A673 (cell line): ENCODE measurements at regions of chr1 and their contacts with region 1.

Region 1: DNA sequence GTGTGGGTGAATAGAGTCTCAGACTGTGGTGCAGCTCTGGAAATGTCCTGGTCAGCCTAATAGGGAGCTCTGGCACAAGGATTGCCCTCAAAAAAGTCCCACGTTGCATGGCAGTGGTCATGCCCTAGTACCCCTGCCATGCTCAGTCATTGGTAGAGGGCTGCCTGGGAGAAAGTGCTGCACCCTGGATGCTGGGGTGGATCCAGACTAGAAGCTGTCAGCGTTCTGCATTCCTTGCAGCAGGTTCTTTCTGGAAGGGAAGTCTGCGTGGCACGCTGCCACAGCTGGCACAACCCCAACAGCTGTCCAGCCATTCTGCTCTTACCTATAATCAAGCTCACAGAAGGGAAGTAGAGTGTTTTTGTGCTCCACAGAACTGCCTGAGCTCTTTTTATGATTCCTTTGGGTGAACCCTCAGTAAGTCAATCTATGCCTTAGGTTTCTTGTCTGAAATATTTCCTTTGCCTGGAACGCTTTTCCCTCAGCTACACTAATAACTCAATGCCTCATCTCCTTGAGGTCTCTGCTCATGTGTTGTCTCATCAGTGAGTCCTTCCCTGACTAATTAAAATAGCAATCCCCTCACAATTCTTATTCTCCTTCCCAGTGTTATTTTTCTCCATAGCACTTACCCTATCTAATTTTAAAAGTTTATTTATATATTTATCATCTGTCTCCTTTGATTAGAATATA is 61.5 kb upstream of the JAK1 start:
- DNase-seq: no peak
- H3K4me3 ChIP-seq: no peak overlapping the region
- H3K27ac ChIP-seq: peak overlapping the region; percentile 78
- H3K4me1 ChIP-seq: peaks cover 40% of the 10 kb centered on the region
- H3K27me3 ChIP-seq: no peaks in the 10 kb centered on the region
- CTCF ChIP-seq: no peak

Region 2: DNA sequence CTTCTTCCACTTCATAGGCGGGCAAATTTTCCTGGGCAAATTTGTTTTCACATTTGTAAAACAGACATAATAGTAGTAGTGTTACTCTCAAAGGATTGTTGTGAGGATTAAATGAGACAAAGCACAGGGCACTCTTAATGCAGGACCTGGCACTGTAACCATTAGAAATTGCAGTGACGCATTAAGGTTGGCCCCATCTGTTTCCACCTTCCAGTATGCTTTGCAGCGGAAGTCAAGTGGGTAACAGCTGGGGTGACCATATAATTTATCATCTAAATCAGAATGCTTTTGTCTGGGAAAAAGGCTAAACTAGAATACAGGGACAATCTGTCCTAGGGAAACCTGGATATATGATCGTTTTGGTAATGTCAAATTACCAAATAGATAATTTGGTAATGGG is 690.3 kb before region 1 on chr1:
- CTCF ChIA-PET with region 1: no interaction called
- POLR2A ChIA-PET with region 1: interaction called, 11 read pairs
- intact Hi-C with region 1: no loop called
- DNase-seq: peak; percentile 79
- H3K4me3 ChIP-seq: no peak overlapping the region
- H3K27ac ChIP-seq: peak overlapping the region; percentile 94
- H3K4me1 ChIP-seq: peaks cover 33% of the 10 kb centered on the region
- H3K27me3 ChIP-seq: no peaks in the 10 kb centered on the region
- CTCF ChIP-seq: no peak

Region 3: DNA sequence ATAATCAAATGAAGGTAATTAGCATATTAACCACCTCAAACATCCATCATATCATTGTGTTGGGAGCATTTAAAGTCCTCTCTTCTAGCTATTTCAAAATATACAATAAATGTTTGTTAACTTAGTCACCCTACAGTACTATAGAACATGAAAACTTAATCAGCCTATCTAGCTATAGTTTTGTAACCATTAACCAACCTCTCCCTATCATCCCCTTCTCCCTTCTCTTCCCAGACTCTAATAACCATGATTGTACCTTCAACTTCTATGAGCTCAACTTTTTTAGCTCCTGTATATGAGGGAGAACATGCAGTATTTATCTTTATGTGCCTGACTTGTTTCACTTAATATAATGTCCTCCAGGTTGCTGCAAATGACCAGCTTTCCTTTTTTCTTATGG is 228.9 kb before region 1 on chr1:
- CTCF ChIA-PET with region 1: no interaction called
- POLR2A ChIA-PET with region 1: no interaction called
- intact Hi-C with region 1: no loop called
- DNase-seq: no peak
- H3K4me3 ChIP-seq: no peak overlapping the region
- H3K27ac ChIP-seq: no peak overlapping the region
- H3K4me1 ChIP-seq: no peaks in the 10 kb centered on the region
- H3K27me3 ChIP-seq: no peaks in the 10 kb centered on the region
- CTCF ChIP-seq: no peak

Region 4: DNA sequence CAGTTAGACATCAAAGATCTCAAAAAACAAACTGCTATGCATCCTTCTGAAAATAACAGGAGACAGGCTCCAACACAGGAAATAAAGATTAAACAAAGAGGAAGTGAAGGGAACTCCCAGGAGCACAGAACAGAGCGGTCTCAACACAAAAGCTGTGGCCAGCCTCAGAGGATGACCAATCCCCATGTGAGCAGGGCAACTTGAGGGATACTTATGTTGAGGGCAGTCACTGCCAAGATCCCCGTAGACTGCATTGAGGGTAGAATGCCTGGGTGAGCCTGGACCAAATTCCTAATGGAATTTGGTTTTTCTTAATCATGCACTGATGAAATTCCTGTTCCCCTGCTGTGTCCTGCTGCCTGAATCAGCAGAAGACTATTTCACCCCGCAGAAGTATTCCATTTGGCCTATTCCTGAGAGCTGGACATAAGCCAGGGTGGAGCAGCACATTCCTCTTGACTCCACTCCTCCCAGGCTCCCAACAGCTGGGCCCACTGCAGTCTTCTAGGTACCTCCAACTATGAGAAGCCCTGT is 110.4 kb before region 1 on chr1:
- CTCF ChIA-PET with region 1: no interaction called
- POLR2A ChIA-PET with region 1: no interaction called
- intact Hi-C with region 1: loop called (anchors 5 kb)
- DNase-seq: peak; percentile 92
- H3K4me3 ChIP-seq: no peak overlapping the region
- H3K27ac ChIP-seq: peak overlapping the region; percentile 99
- H3K4me1 ChIP-seq: peaks cover 85% of the 10 kb centered on the region
- H3K27me3 ChIP-seq: no peaks in the 10 kb centered on the region
- CTCF ChIP-seq: no peak

Region 5: DNA sequence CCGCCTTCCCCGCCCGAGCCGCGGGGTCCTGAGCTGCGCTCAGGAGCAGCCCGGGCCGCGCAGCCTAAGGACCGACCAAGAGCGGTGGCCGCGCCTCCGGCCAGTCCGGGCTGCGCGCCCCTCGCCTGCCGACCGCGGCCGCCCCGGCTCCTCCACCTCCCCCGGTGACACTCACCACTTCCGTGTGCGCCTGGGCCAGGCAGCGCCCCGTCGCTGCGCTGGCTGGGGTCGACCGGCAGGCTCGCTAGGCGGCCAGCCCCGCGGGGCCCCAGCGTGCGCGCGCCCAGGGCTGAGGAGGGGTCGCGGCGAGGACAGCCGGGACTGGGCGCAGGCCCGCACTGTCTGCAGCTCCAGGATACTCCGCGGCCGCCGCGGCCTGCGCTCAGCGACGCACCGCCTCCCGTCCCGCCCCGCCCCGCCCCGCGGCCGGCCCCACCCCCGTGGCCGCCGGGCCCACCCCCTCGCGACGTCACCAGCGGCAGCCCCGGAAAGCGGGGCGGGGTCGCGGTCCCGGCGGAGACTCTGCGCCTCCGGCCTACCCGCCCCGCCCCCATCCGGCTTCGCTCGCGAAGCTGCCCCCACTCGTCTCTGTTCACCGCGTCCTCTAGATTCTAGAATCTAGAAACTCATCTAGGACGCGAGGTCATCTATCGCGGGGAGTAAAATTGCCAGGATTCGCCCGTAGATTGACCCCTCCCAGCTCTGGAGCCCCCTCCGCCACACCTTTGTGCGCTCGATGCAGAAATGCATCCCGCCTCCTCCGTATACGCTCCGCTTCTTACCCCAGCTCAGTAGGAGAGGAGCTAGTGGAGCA is 61.4 kb before region 1 on chr1 and contains the start of gene JAK1:
- CTCF ChIA-PET with region 1: no interaction called
- POLR2A ChIA-PET with region 1: no interaction called
- intact Hi-C with region 1: loop called (anchors 1 kb)
- DNase-seq: peak; percentile 90
- H3K4me3 ChIP-seq: peak within 1 kb of the TSS; percentile 83
- H3K27ac ChIP-seq: peak within 1 kb of the TSS; percentile 90
- H3K4me1 ChIP-seq: peaks cover 47% of the 10 kb centered on the region
- H3K27me3 ChIP-seq: no peaks in the 10 kb centered on the region
- CTCF ChIP-seq: no peak
- total RNA-seq, gene JAK1: 318 and 339 TPM in 2 replicates